ENCODE measurements at regions of chr3 and their contacts with region 1.

Region 1: DNA sequence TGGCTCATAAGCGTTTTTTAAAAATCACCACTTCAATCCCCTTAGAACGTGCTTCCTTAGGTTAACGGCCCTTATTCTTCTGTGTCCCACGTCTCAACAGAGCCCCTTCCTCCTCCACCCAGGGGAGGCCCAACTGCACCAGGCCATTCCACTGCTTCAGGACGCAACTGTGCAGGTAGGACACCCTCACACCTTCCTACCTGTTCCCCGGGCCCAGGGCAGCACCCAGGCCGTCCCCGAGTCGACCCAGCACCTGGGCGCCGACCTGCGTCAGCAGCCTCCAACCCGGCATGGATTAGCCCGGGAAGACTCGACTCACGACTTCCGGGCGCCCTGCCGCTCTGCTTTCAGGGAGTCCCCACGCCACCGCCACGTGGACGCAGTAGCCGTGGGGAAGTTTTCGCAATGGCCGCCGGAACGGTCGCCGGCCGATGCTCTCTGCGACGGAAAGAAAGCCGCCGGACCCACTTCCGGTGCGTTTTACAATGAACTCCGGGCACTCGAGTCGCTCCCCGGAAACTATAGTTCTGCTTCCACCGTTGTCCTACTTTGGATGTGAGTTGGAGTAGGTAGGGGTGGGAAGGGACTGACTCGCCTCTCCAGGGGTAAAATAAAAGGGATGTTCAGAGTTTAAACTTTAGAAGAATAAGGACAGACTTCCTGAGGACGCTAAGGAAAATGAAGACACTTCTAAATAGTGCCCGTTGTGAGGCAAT is at the start of gene MRPL3:
- DNase-seq: peak; percentile 88 to 95
- H3K4me3 ChIP-seq: peak within 1 kb of the TSS; percentile 76 to 96 (median 88)
- H3K27ac ChIP-seq: peak within 1 kb of the TSS; percentile 63 to 88 (median 82)
- H3K4me1 ChIP-seq: peaks cover 7 to 35% (median 27%) of the 10 kb centered on the region in 4 donors
- H3K27me3 ChIP-seq: peaks cover 0 to 8% (median 0%) of the 10 kb centered on the region in 3 donors
- CTCF ChIP-seq: no peak
- EP300 ChIP-seq: no peak
- POLR2A ChIP-seq: no peak
- total RNA-seq, gene MRPL3: 12.8 to 99.0 (median 37.9) TPM

Region 2: GRCh38 chr3:131370935-131371687 is 131.6 kb before region 1 on chr3:
- intact Hi-C with region 1: loop called (anchors 5 kb)
- DNase-seq: no peak
- H3K4me3 ChIP-seq: no peak overlapping the region
- H3K27ac ChIP-seq: peak overlapping the region in 4 of 5 donors; percentile 41 to 76 (median 44)
- H3K4me1 ChIP-seq: peaks cover 0 to 17% (median 6%) of the 10 kb centered on the region in 4 donors
- H3K27me3 ChIP-seq: no peaks in the 10 kb centered on the region
- CTCF ChIP-seq: no peak
- EP300 ChIP-seq: no peak
- POLR2A ChIP-seq: no peak

Measured in stomach (tissue), 19 donors.